CD4-positive, alpha-beta T cell (primary cell): ENCODE measurements at regions of chr18 and their contacts with region 1.

Region 1: DNA sequence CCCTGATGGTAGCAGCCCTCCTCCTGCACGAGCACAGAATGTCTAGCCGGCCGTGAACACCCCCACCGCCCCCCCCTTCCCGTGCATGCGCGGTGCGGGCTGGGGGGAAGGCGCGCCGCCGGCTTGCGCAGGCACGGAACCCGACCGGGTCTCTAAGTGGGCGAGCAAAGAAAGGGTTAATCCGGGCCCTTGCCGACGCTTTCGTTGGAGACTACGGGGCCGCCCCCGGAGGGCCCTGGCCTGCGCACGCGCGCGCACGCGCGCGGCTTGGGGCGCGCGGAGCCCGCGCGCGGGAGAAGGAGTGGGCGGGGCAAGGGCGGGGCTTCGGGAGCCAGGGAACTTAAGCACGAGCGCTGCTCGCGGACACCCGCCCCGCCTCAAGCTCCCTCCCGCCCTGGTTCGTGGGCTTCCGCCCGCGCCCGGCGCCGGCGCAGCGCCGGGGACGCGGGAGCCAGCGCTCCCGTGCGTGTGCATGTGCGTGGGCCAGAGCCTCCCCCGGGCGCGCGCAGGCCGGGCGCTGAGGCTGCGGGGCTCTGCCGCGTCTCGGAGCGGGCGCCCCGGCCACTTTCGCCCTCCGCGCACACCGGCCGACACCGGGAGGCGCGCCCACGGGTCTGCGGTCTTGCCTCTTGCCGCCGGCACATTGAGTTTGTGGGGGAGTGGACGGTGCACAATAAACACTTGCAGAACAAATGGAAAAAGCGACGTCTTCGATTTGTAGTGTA is 617 bp upstream of the ZBTB14 start:
- DNase-seq: peak; percentile 93 to 98 (median 96)
- ATAC-seq: peak; percentile 60
- H3K4me3 ChIP-seq: peak overlapping the region; percentile 79
- H3K4me3 Mint-ChIP-seq: peak overlapping the region; percentile 97
- H3K27ac ChIP-seq: peak overlapping the region; percentile 87 to 89
- H3K27ac Mint-ChIP-seq: peak overlapping the region; percentile 98
- H3K4me1 ChIP-seq: peaks cover 24% of the 10 kb centered on the region
- H3K4me1 Mint-ChIP-seq: peaks cover 47% of the 10 kb centered on the region
- H3K27me3 ChIP-seq: peaks cover 0 to 3% of the 10 kb centered on the region in 2 experiments
- H3K27me3 Mint-ChIP-seq: no peaks in the 10 kb centered on the region
- CTCF ChIP-seq: no peak

Region 2: GRCh38 chr18:5057386-5058348 is 238.5 kb before region 1 on chr18:
- CTCF ChIA-PET with region 1: no interaction called
- POLR2A ChIA-PET with region 1: interaction called, 22 read pairs
- intact Hi-C with region 1: no loop called
- DNase-seq: peak; percentile 13 to 70 (median 26)
- ATAC-seq: peak; percentile 25
- H3K4me3 ChIP-seq: no peak overlapping the region
- H3K4me3 Mint-ChIP-seq: no peak overlapping the region
- H3K27ac ChIP-seq: no peak overlapping the region
- H3K27ac Mint-ChIP-seq: peak overlapping the region; percentile 40
- H3K4me1 ChIP-seq: peaks cover 18% of the 10 kb centered on the region
- H3K4me1 Mint-ChIP-seq: peaks cover 23% of the 10 kb centered on the region
- H3K27me3 ChIP-seq: no peaks in the 10 kb centered on the region
- H3K27me3 Mint-ChIP-seq: peaks cover 8% of the 10 kb centered on the region
- CTCF ChIP-seq: peak; percentile 68

Region 3: DNA sequence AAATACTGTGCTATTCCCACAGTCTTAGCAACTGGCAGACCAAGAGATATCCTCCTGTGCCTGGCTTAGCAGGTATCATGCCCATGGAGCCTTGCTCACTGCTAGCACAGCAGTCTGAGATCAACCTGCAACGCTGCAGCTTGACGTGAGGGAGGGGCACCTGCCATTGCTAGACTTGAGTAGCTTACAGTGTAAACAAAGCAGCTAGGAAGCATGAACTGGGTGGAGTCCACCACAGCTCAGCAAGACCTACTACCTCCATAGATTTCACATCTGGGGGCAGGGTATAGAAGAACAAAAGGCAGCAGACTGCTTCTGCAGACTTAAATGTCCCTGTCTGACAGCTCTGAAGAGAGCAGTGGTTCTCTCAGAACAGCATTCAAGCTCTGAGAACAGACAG is 173.9 kb before region 1 on chr18:
- CTCF ChIA-PET with region 1: no interaction called
- POLR2A ChIA-PET with region 1: interaction called, 21 read pairs
- intact Hi-C with region 1: no loop called
- DNase-seq: peak in 5 of 14 experiments; percentile 5 to 20 (median 18)
- ATAC-seq: peak; percentile 91
- H3K4me3 ChIP-seq: no peak overlapping the region
- H3K4me3 Mint-ChIP-seq: no peak overlapping the region
- H3K27ac ChIP-seq: no peak overlapping the region
- H3K27ac Mint-ChIP-seq: peak overlapping the region; percentile 70
- H3K4me1 ChIP-seq: peaks cover 7% of the 10 kb centered on the region
- H3K4me1 Mint-ChIP-seq: peaks cover 10% of the 10 kb centered on the region
- H3K27me3 ChIP-seq: no peaks in the 10 kb centered on the region
- H3K27me3 Mint-ChIP-seq: no peaks in the 10 kb centered on the region
- CTCF ChIP-seq: no peak

Region 4: DNA sequence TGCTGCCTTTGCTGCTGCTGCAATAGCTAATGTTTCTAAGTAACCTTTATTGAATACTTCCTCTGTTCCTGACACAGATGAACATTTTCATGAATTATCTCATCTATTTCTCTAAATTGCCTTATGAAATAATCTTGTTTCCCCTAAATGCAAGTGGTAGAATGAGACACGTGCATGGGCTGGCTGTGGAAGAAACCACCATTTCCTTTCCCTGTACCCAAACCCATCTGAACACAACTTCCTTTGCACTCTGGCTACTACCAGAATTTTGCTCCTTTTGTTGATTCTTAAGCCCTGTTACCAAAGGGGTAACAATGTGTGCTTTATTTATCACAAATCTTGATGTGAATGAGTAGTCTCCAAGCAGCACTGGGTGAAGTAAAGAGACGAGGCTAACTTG is 128.3 kb before region 1 on chr18:
- CTCF ChIA-PET with region 1: no interaction called
- POLR2A ChIA-PET with region 1: interaction called, 5 read pairs
- intact Hi-C with region 1: loop called in 1 of 2 experiments (anchors 10 kb)
- DNase-seq: peak in 4 of 14 experiments; percentile 4 to 42 (median 24)
- ATAC-seq: peak; percentile 55
- H3K4me3 ChIP-seq: no peak overlapping the region
- H3K4me3 Mint-ChIP-seq: peak overlapping the region; percentile 69
- H3K27ac ChIP-seq: peak overlapping the region in 1 of 2 donors; percentile 10
- H3K27ac Mint-ChIP-seq: peak overlapping the region; percentile 87
- H3K4me1 ChIP-seq: peaks cover 13% of the 10 kb centered on the region
- H3K4me1 Mint-ChIP-seq: peaks cover 39% of the 10 kb centered on the region
- H3K27me3 ChIP-seq: no peaks in the 10 kb centered on the region
- H3K27me3 Mint-ChIP-seq: no peaks in the 10 kb centered on the region
- CTCF ChIP-seq: no peak

Region 5: DNA sequence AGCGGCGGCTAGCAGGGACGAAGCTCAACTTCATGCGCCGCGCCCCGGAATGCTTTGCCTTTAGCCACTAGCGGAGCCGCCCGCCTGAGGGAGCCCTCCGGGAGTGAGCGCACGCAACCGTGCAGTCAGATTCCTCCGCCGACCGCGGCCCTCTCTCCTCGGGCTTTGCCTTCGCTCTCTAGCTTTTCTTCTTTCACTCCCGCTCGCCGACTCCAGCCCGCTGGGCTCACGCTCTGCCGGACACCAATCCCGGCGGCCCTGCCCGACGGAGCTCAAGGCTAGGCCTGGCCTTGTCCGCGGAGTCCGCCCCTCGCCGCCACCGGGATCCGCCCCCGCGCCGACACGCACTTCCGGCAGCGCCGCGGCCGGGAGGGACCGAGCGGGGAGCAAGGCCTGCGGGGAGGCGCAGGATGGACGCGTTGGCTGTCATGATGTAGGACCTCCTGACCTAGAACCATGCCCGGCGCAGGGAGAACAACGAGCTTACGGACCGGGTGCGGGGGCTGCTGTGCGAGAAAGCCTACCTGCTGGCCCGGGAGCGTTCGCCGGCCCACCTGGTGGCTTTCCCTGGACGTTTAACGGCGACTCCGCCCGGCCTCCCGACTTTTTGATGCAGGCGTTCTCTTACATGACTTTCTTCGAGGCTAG is 58.3 kb before region 1 on chr18:
- CTCF ChIA-PET with region 1: interaction called, 3 read pairs
- POLR2A ChIA-PET with region 1: interaction called, 459 read pairs
- intact Hi-C with region 1: loop called (anchors 1 to 2 kb)
- DNase-seq: peak; percentile 74 to 92 (median 84)
- ATAC-seq: peak; percentile 86
- H3K4me3 ChIP-seq: peak overlapping the region; percentile 82
- H3K4me3 Mint-ChIP-seq: peak overlapping the region; percentile 94
- H3K27ac ChIP-seq: peak overlapping the region; percentile 94 to 97
- H3K27ac Mint-ChIP-seq: peak overlapping the region; percentile 99
- H3K4me1 ChIP-seq: peaks cover 25% of the 10 kb centered on the region
- H3K4me1 Mint-ChIP-seq: peaks cover 68% of the 10 kb centered on the region
- H3K27me3 ChIP-seq: no peaks in the 10 kb centered on the region
- H3K27me3 Mint-ChIP-seq: peaks cover 6% of the 10 kb centered on the region
- CTCF ChIP-seq: peak; percentile 53

Region 6: DNA sequence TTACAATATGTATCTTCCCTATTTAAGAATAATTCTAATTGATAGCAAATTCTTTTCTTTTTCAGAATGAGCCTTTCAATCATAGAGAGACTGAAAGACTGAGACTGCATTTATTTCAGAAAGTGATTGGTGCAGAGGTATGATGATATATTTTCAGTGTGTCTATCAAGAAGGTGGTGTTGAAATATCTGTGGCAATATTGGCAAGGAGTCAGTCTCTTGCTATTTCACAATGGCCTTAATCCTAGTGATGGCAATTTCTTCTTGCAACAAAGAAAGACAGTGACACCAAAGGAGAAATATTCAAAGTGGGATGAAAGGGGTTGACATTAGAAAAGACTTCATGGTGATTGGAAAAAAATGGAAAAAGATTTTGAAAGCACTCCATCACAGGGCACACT is 21.0 kb after region 1 on chr18:
- CTCF ChIA-PET with region 1: no interaction called
- POLR2A ChIA-PET with region 1: interaction called, 93 read pairs
- intact Hi-C with region 1: no loop called
- DNase-seq: no peak
- ATAC-seq: no peak
- H3K4me3 ChIP-seq: no peak overlapping the region
- H3K4me3 Mint-ChIP-seq: no peak overlapping the region
- H3K27ac ChIP-seq: no peak overlapping the region
- H3K27ac Mint-ChIP-seq: no peak overlapping the region
- H3K4me1 ChIP-seq: no peaks in the 10 kb centered on the region
- H3K4me1 Mint-ChIP-seq: no peaks in the 10 kb centered on the region
- H3K27me3 ChIP-seq: no peaks in the 10 kb centered on the region
- H3K27me3 Mint-ChIP-seq: no peaks in the 10 kb centered on the region
- CTCF ChIP-seq: no peak

Region 7: DNA sequence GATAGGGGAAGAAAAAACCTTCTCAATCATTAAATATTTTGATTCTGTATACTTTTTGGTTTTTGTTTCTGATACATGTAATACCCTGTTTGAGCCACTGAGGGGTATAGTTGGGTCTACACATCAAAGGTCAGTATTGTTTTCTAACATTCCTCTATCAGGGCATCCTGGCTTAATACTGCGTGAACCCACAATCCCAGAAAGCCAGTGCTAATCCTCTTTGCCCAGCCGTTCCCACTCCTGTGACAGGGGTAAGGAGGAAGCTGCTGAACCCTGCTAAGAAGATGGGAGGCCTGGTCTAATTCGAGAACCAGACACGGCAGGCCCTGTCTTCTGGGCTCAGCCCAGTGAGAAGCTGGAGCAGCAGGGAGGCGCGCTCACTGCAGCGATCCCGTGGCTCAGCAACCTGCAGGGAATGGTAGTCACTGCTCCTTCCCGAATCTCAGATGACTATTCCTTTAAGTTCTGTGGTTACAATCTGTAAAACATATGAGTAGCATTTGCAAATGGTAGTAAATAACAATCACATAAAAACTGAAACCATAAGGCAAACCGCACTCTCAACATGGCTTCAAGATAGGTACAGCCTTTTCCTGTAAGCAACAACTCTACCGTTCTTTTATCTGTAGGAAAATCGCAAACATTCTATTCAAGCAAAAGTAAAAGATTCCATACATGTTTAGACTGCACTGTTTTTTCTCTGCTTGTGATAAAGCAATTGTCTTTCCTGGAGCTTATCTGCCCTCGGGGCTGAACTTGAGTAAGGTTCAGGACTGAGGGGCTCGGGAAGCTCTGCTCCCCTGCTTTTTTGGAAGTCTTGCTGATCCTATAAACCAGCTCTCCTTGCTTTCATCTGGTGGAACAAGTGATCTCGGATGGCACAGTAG is 160.7 kb after region 1 on chr18:
- CTCF ChIA-PET with region 1: no interaction called
- POLR2A ChIA-PET with region 1: interaction called, 50 read pairs
- intact Hi-C with region 1: no loop called
- DNase-seq: peak in 5 of 14 experiments; percentile 4 to 50 (median 30)
- ATAC-seq: peak; percentile 78
- H3K4me3 ChIP-seq: peak overlapping the region; percentile 50
- H3K4me3 Mint-ChIP-seq: peak overlapping the region; percentile 84
- H3K27ac ChIP-seq: peak overlapping the region in 1 of 2 donors; percentile 65
- H3K27ac Mint-ChIP-seq: peak overlapping the region; percentile 90
- H3K4me1 ChIP-seq: peaks cover 5% of the 10 kb centered on the region
- H3K4me1 Mint-ChIP-seq: peaks cover 36% of the 10 kb centered on the region
- H3K27me3 ChIP-seq: no peaks in the 10 kb centered on the region
- H3K27me3 Mint-ChIP-seq: no peaks in the 10 kb centered on the region
- CTCF ChIP-seq: peak; percentile 59